ENCODE measurements at regions of chr1 and their contacts with region 1.

Region 1: GRCh38 chr1:84936116-84936810 is 43.3 kb upstream of the LPAR3 start:
- DNase-seq: no peak
- ATAC-seq: peak; percentile 80

Region 2: DNA sequence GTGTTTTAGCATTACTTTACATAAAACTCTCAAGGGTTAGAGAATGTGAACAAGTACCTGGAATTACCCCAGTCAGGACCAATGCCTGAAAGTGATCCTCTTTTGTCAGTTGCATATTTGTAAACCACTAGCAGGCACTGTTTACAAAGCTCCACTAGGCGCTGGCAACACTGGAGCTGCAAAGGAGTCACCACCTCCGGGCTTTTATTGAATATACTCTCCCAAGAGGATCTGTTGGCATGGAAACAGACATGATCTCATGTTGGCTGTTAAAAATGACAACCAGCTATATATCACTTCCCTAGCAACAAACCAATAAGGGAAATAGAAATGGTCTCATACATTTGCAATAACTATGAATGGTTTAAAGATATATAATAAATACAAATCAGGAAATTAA is 1053.4 kb before region 1 on chr1:
- intact Hi-C with region 1: no loop called
- DNase-seq: peak; percentile 20 to 27
- ATAC-seq: peak; percentile 91

Region 3: GRCh38 chr1:84763912-84764663 is 172.2 kb before region 1 on chr1:
- intact Hi-C with region 1: loop called in 1 of 2 experiments (anchors 10 kb)
- DNase-seq: no peak
- ATAC-seq: no peak

Region 4: DNA sequence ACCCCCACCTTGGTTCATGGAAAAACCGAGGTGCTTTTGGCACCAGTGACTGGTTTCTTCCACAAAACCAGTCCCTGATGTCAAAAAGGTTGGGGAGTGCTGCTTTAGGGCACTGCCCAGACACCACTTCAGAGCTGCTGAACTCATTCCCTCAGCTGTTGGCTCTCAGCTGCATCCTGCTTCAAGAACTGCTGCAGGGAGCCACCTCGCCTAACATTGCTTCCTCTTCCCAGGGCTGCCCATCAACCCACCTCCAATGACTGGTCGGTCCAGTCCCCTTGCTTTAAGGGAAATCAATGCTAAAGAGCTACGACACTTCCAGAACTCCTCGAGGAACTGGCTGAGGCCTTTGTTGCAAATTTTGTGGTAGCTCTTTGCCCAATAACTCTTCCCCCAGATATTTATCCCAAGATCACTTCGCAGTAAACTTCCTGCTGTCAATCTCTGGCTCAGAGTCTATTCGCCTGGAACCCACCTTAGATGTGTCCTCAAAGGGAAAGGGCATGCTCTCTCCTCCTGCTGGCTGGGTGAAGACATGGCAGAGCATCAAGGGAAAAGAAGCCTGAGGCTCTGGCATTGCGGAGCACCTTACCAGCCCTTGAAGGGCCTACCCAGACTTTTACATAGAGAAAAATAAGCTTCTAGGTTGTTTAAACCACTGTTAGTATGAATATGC is 294.2 kb after region 1 on chr1:
- intact Hi-C with region 1: no loop called
- DNase-seq: no peak
- ATAC-seq: no peak

Region 5: DNA sequence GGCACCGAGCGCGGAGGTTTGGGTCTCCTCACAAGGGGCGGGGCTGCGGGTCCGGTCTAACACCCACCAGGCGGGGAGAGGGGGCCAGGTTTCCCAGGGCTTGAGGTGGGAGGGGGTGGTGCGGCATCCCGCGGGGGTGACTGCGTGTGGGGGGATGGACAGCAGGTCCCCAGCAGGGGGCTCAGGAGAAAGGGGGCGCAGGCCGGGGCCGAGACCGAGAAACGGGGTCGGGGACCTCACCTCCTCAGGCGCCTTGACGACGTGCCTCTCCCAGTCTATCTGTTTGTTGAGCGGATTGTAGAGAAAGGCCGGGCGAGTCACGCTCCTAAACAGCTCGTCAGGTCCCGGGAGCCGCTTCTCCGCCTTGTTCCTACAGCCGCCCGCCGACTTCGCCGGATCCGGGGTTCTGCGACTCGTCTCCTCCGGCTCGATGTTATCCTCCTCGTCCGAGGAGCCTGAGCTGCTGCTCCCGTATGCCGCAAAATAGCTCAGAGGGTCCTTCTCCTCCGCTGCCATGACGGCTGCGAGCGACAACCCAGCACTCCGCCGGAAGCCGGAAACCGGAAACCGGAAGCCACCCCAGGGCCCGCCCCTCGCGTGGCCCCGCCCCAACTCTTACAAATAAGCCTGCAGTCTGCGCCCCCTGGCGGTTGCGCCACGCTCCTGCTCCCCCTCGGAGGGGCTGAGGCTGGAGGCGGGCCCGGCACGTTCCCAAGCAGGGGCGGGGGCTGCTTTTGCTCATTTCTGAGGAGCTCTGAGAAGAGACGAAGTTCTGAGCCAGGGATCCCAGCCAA is 323.1 kb after region 1 on chr1 and contains the start of gene C1orf52:
- intact Hi-C with region 1: loop called (anchors 5 to 10 kb)
- DNase-seq: peak; percentile 93 to 98
- ATAC-seq: peak; percentile 90
- total RNA-seq, gene C1orf52: 17.4 to 20.3 TPM

Measured in left colon (tissue), 2 donors.